ENCODE measurements at regions of chr5 and their contacts with region 1.

Region 1: DNA sequence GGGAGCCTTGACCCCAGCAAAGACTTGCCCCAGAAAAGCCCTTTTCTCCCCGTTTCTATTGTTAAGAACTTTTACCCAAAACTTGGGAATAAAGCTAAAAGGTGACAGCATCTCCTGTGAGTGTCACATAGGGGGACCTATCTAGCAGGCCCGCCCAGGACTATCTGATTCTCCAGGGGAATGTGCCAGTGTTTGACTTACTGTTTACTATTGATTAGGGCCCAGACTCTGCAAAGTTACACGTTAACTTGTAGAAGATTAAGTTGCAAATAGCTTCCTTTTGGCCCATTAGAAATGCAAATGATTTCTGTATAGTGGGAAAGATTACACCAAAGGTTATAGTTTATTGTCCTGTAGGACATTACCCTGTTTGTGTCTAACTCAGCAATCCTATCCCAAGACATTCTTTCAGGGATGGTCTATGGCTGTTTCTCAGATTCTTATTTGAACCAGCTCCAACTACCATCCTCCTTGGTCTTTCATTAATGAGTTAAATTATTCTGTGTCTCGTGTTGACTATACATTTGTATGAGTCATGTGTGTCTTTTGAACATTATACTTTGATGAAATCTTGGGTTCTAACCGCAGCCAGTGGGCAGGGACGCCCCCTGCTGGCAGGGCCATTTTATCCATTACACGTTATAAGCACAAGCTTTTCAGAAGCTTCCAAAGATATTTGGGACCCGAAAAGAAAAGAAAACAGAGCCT is 60.7 kb downstream of the HRH2 start:
- DNase-seq: no peak
- ATAC-seq: peak; percentile 81
- H3K4me3 ChIP-seq: no peak overlapping the region
- H3K27ac ChIP-seq: no peak overlapping the region
- H3K4me1 ChIP-seq: peaks cover 7% of the 10 kb centered on the region
- H3K27me3 ChIP-seq: peaks cover under 1 to 3% of the 10 kb centered on the region in 2 experiments; a peak in 1 of 5 replicates
- CTCF ChIP-seq: peak; percentile 76
- EP300 ChIP-seq: no peak
- POLR2A ChIP-seq: no peak
- RAD21 ChIP-seq: peak; percentile 54; the same call in 1 of the 2 replicates

Region 2: GRCh38 chr5:175464074-175464941 is 254.2 kb before region 1 on chr5:
- CTCF ChIA-PET with region 1: no interaction called
- POLR2A ChIA-PET with region 1: no interaction called
- in situ Hi-C with region 1: no loop called
- intact Hi-C with region 1: loop called (anchors 10 kb)
- DNase-seq: peak; percentile 60
- ATAC-seq: peak; percentile 96
- H3K4me3 ChIP-seq: no peak overlapping the region
- H3K27ac ChIP-seq: no peak overlapping the region
- H3K4me1 ChIP-seq: peaks cover 18% of the 10 kb centered on the region
- H3K27me3 ChIP-seq: peaks cover 0 to 35% of the 10 kb centered on the region in 2 experiments; a peak in 3 of 5 replicates
- CTCF ChIP-seq: peak; percentile 73
- EP300 ChIP-seq: no peak
- POLR2A ChIP-seq: no peak
- RAD21 ChIP-seq: no peak

Region 3: GRCh38 chr5:176547802-176548201 is 829.2 kb after region 1 on chr5:
- CTCF ChIA-PET with region 1: no interaction called
- POLR2A ChIA-PET with region 1: no interaction called
- in situ Hi-C with region 1: no loop called
- intact Hi-C with region 1: no loop called
- DNase-seq: peak; percentile 78
- ATAC-seq: peak; percentile 12
- H3K4me3 ChIP-seq: no peak overlapping the region; a peak in 1 of 6 replicates
- H3K27ac ChIP-seq: peak overlapping the region; percentile 58
- H3K4me1 ChIP-seq: peaks cover 66% of the 10 kb centered on the region
- H3K27me3 ChIP-seq: no peaks in the 10 kb centered on the region
- CTCF ChIP-seq: no peak
- EP300 ChIP-seq: peak; percentile 45 to 67; a peak in 2 of 4 replicates
- POLR2A ChIP-seq: peak in 1 of 2 experiments; percentile 71; a peak in 2 of 4 replicates
- RAD21 ChIP-seq: no peak

Measured in HepG2 (cell line).